ENCODE measurements at regions of chr14 and their contacts with region 1.

Region 1: GRCh38 chr14:100383727-100384158 is 60.6 kb downstream of the SLC25A47 start:
- DNase-seq: peak in 3 of 4 donors; percentile 61 to 90 (median 63)
- ATAC-seq: peak; percentile 83
- H3K4me3 ChIP-seq: no peak overlapping the region
- H3K27ac ChIP-seq: no peak overlapping the region
- H3K4me1 ChIP-seq: peaks cover 6 to 26% of the 10 kb centered on the region in 2 donors
- H3K27me3 ChIP-seq: no peaks in the 10 kb centered on the region
- CTCF ChIP-seq: peak; percentile 78 to 80

Region 2: DNA sequence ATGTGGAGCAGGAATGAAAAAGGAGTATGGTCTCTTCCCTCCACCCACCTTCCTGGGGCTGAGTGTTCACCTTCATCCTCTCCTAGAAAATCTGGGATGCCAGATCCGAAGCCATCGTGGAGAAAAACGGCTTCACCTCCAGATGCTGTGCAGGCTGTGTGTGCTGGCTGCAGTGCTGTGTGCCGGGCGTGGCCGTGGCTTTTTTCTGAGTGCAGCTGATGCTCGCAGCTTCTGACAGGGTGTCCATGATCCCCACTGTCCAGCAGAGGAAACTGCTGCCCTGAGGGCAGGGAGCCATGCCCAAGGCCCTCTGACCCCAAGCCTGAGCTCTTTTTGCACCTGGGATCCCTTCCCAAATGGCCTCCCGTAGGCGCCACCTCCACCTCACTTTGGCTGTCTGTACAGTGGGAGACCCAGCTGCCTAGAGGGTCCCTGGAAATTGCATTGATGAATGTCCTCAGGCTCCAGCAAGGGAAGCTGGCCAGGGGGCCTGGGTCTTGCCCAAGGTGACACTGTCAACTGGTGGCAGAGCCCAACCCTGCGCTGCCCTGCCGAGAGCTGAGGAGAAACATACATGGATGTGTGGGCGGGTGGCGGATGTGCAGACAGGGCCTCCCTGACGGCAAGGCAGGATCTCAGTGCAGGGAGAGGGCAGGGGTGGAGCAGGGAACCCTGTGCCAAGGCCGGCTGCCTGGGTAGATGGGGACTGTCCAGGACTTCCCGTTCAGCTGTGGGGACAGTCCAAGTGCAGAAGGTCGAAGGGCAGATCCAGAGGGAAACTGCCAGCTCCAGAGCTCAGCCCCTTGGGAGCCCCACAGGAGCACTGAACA is 150.1 kb after region 1 on chr14:
- intact Hi-C with region 1: no loop called
- DNase-seq: peak in 2 of 4 donors; percentile 50 to 79
- ATAC-seq: peak; percentile 39
- H3K4me3 ChIP-seq: no peak overlapping the region
- H3K27ac ChIP-seq: no peak overlapping the region
- H3K4me1 ChIP-seq: peaks cover 14 to 23% of the 10 kb centered on the region in 2 donors
- H3K27me3 ChIP-seq: no peaks in the 10 kb centered on the region
- CTCF ChIP-seq: no peak

Region 3: GRCh38 chr14:100629696-100630095 is 246.0 kb after region 1 on chr14:
- intact Hi-C with region 1: loop called in 1 of 2 experiments (anchors 10 kb)
- DNase-seq: peak in 1 of 4 donors; percentile 61
- ATAC-seq: no peak
- H3K4me3 ChIP-seq: no peak overlapping the region
- H3K27ac ChIP-seq: no peak overlapping the region
- H3K4me1 ChIP-seq: no peaks in the 10 kb centered on the region
- H3K27me3 ChIP-seq: peaks cover 0 to 25% of the 10 kb centered on the region in 2 donors
- CTCF ChIP-seq: no peak

Region 4: GRCh38 chr14:100654814-100655740 is 271.3 kb after region 1 on chr14:
- intact Hi-C with region 1: loop called in 1 of 2 experiments (anchors 5 kb)
- DNase-seq: peak in 1 of 4 donors; percentile 89
- ATAC-seq: peak; percentile 93
- H3K4me3 ChIP-seq: no peak overlapping the region
- H3K27ac ChIP-seq: no peak overlapping the region
- H3K4me1 ChIP-seq: peaks cover 0 to 5% of the 10 kb centered on the region in 2 donors
- H3K27me3 ChIP-seq: peaks cover 0 to 44% of the 10 kb centered on the region in 2 donors
- CTCF ChIP-seq: peak; percentile 73 to 78